Vagina (tissue), 2 donors: ENCODE measurements at regions of chr2 and their contacts with region 1.

Region 1: DNA sequence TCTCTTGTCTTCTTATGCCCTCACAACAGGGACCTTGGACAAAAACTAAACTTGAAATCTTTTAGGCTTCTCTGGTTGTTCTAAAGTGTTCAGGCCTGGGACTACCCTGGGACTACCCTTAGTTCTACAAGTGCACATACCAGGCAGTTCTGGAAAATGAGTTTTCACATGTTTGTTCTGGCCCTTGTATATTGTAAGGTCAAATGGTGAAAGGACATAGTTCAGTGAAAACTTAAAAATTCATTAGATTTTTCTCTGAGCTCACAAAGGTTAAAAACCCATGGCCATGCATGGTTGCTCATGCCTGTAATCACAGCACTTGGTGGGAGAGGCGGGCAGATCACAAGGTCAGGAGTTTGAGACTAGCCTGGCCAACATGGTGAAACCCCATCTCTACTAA is 875.5 kb upstream of the FAM98A start:
- DNase-seq: no peak
- H3K4me3 ChIP-seq: no peak overlapping the region
- H3K27ac ChIP-seq: no peak overlapping the region
- H3K4me1 ChIP-seq: no peaks in the 10 kb centered on the region
- H3K27me3 ChIP-seq: no peaks in the 10 kb centered on the region
- CTCF ChIP-seq: no peak
- POLR2A ChIP-seq: no peak

Region 2: DNA sequence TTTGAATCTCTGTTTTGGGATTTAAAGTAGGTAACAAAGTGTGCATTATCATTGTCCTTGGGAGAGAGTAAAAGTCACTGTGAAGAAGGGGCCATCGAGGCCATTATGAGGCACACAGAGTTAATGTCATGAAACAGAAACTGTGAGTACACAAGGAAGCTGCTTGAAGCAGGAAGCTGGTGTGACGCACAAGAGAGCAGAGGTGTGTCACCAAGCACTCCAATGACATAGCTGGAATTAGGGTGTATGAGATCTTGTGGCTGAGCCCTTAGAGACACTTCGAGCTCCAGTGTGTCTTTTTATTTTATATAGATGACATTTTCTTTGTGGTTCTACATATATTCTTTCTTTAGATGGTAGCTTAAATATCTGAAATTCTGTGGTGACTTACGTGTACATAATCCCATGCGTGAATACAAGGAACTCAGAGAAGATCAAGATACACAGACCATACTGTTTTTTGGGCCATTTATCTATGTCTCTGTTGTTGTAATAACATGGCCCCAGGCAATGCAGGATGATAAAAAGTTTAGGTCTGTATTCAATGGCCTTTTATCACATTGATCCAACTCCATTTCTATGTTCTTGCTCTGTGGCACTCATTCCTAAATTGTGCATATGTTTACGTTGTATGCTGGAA is 710.9 kb before region 1 on chr2:
- intact Hi-C with region 1: loop called (anchors 10 kb)
- DNase-seq: no peak
- H3K4me3 ChIP-seq: no peak overlapping the region
- H3K27ac ChIP-seq: no peak overlapping the region
- H3K4me1 ChIP-seq: no peaks in the 10 kb centered on the region
- H3K27me3 ChIP-seq: no peaks in the 10 kb centered on the region
- CTCF ChIP-seq: no peak
- POLR2A ChIP-seq: no peak

Region 3: DNA sequence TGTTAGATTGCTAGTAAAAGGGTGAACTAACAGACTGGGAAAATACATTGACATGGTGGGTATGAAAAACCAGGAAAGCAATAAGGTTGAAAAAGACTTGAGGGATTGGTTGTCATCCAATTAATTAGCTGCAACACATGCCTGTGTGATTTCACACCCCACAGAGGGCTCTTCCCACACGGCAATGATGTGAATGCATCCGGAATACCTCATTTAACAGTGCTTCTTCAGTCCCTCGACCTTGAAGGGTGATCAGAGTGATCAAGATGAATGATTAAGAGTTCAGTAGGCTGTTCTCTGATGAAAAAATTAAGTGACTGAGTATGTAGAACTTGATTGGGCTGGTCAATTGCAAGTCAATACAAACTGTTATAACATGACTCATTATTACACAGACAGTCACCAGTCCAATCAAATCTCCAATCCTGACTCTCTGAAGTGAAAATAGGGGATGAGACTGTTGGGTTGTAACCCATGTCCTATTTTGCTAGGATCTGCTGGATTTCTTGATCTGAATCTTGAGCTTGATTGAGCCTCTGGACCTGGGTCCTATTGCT is 49.4 kb after region 1 on chr2:
- intact Hi-C with region 1: no loop called
- DNase-seq: no peak
- H3K4me3 ChIP-seq: no peak overlapping the region
- H3K27ac ChIP-seq: no peak overlapping the region
- H3K4me1 ChIP-seq: no peaks in the 10 kb centered on the region
- H3K27me3 ChIP-seq: no peaks in the 10 kb centered on the region
- CTCF ChIP-seq: no peak
- POLR2A ChIP-seq: no peak

Region 4: GRCh38 chr2:34979148-34979547 is 504.5 kb after region 1 on chr2:
- intact Hi-C with region 1: no loop called
- DNase-seq: no peak
- H3K4me3 ChIP-seq: no peak overlapping the region
- H3K27ac ChIP-seq: no peak overlapping the region
- H3K4me1 ChIP-seq: no peaks in the 10 kb centered on the region
- H3K27me3 ChIP-seq: no peaks in the 10 kb centered on the region
- CTCF ChIP-seq: no peak
- POLR2A ChIP-seq: no peak

Region 5: DNA sequence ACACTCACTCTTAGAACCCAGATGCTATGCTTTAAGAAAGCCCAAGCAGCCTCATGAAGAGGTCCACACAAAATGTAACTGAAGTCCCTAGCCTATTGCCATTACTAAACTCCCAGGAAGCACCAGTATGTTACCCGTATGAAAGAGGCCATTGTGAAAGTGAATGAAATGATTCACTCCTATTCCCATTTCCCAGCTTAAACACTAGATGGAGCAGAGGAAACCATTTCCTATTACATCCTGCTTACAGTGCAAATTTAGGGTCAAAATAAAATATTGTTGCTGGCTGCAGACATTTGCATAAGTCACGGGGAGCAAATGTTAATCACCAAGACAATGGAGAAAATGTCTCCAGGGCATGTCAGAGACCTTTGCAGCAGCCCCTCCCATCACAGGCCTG is 891.2 kb after region 1 on chr2:
- intact Hi-C with region 1: no loop called
- DNase-seq: no peak
- H3K4me3 ChIP-seq: no peak overlapping the region
- H3K27ac ChIP-seq: no peak overlapping the region
- H3K4me1 ChIP-seq: no peaks in the 10 kb centered on the region
- H3K27me3 ChIP-seq: no peaks in the 10 kb centered on the region
- CTCF ChIP-seq: no peak
- POLR2A ChIP-seq: no peak